ENCODE measurements at regions of chr16 and their contacts with region 1.

Region 1: DNA sequence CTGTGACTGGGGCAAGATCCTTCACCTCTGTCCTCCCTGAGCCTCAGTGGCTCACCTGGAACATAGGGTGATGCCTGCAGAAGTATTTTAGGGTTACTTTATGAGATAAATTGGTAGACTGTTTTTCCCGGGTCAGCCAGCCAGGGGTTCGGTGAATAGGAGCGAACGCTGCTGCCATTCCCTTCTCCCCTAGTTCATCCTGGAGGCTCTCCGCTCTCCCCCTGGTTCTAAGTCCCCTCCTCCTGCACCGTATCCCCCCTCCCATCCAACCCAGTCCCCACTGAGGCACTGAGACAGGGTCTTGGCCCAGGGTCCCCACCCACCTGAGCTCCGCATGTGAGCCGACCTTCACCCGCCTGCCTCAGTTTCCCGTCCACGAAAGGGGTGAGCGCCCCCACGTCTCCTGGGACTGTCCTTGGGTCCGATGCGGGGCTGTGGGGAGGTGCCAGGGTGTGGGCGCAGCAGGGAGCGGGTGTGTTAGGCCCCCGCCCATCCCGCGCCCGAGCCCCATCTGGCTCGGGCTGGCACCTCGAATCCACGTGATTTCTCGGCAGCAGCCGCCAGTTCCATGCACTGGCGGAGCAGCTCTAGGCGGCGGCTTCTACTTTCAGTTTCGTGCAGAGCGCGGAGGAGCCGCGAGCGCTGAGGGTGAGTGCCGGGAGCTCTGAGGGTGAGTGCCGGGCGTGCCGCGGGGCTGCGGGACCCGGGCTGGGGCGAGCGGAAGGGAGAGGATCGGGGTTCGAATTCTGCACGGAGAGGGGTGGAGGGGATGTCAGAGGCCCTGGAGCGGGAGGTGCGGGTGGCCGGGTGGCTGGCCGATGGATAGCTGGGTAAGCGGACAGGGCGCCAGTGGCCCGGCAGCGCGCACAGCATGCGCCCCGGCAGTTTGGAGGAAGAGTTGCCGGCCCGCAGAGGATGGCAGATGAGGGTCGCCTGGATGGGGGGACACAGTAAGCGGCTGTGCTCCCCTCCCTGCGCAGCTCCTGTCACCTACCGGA is at the start of gene NLRC5:
- DNase-seq: peak; percentile 95
- H3K4me3 Mint-ChIP-seq: peak within 1 kb of the TSS; percentile 99
- H3K27ac Mint-ChIP-seq: peak within 1 kb of the TSS; percentile 100
- H3K4me1 Mint-ChIP-seq: peaks cover 73% of the 10 kb centered on the region
- H3K27me3 Mint-ChIP-seq: no peaks in the 10 kb centered on the region
- total RNA-seq, gene NLRC5: 104 to 119 TPM

Region 2: GRCh38 chr16:56938422-56939156 is 50.7 kb before region 1 on chr16:
- CTCF ChIA-PET with region 1: no interaction called
- intact Hi-C with region 1: loop called (anchors 2 kb)
- DNase-seq: peak; percentile 78
- H3K4me3 Mint-ChIP-seq: peak overlapping the region; percentile 51
- H3K27ac Mint-ChIP-seq: peak overlapping the region; percentile 92
- H3K4me1 Mint-ChIP-seq: peaks cover 89% of the 10 kb centered on the region
- H3K27me3 Mint-ChIP-seq: no peaks in the 10 kb centered on the region

Region 3: DNA sequence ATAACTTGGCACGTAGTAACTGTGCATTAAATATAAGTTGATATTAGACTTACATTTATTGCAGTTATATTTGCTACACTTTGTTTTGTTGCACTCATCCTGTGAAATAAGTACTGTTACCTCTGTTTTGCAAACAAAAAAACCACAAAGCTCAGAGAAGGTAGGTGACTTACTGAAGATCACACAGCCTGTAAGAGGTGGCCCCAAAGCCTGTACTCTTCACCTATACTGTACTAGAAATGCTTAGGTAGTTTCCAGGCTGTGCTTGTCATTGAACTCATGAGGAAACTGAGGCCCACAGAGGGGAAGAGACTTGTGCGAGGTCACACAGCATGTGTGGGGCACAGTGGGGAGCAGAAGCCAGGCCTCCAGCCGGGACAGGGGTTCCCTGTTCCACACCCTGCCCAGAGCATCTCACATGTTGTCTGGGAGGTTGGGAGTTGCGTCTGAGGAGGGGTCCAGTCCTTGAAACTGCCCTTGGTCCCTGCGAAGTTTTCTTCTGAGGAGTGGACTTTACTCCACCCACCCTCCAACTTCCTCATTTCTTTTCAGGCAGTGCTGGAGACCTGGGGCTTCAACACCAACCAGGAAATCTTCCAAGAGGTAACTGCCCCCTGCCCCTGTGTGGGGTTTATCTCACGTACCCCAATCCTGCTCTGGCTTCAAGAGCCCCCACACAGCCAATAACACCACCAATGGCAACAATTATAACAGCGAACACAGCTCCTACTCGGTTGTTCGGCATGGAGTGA is 14.5 kb before region 1 on chr16:
- CTCF ChIA-PET with region 1: no interaction called
- intact Hi-C with region 1: no loop called
- DNase-seq: no peak
- H3K4me3 Mint-ChIP-seq: no peak overlapping the region
- H3K27ac Mint-ChIP-seq: no peak overlapping the region
- H3K4me1 Mint-ChIP-seq: peaks cover 24% of the 10 kb centered on the region
- H3K27me3 Mint-ChIP-seq: no peaks in the 10 kb centered on the region

Region 4: GRCh38 chr16:57000271-57001025 is 11.2 kb after region 1 on chr16:
- CTCF ChIA-PET with region 1: no interaction called
- intact Hi-C with region 1: loop called (anchors 1 kb)
- DNase-seq: peak; percentile 85
- H3K4me3 Mint-ChIP-seq: peak overlapping the region; percentile 50
- H3K27ac Mint-ChIP-seq: peak overlapping the region; percentile 97
- H3K4me1 Mint-ChIP-seq: peaks cover 92% of the 10 kb centered on the region
- H3K27me3 Mint-ChIP-seq: no peaks in the 10 kb centered on the region

Region 5: GRCh38 chr16:57013229-57013628 is 24.0 kb after region 1 on chr16:
- CTCF ChIA-PET with region 1: interaction called, 6 read pairs
- intact Hi-C with region 1: loop called (anchors 1 kb)
- DNase-seq: no peak
- H3K4me3 Mint-ChIP-seq: no peak overlapping the region
- H3K27ac Mint-ChIP-seq: peak overlapping the region; percentile 97
- H3K4me1 Mint-ChIP-seq: peaks cover 85% of the 10 kb centered on the region
- H3K27me3 Mint-ChIP-seq: no peaks in the 10 kb centered on the region

Measured in activated naive CD4-positive, alpha-beta T cell treated with anti-CD3 and anti-CD28 coated beads for 36 hours (primary cell).